ENCODE measurements at regions of chr14 and their contacts with region 1.

Region 1: DNA sequence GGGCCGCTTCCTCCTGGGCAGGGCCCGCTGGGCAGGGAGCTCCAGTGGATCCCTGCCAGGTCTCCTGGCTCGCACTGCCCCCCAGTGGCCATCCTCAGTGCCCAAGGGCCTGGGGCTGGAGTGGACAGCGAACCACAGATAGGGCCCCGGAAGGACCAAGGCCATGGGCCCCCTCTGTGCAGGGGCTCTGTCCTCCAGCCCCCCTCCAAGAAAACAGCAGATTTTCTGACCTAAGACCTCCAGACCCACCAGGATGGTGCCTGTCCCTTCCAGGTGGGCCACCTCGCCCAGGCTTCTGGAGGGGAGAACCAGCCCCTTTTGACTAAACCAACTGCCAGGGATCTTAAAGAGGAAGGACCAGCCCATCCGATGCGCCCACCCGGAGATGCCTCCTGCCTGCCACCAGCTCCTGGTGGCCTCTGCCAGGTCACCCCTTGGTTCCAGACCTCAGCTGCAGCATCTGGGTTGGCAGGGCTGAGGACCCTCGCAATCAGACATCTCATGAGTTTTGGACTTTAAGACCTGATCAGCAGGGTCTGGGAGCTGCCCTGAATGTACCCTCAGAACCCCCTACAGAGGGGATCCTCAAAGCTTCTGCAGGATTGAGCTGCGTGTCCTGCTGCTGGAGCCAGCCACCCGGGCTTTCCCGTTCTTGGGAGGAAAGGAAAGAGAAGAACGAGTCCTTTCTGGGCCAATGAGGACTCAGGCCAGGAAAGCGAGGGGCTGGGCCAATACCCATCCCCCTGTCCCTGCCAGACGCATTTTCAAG is 325.8 kb upstream of the DIO3 start:
- DNase-seq: no peak
- ATAC-seq: no peak
- H3K4me3 Mint-ChIP-seq: no peak overlapping the region
- H3K27ac Mint-ChIP-seq: no peak overlapping the region
- H3K4me1 Mint-ChIP-seq: no peaks in the 10 kb centered on the region
- H3K27me3 Mint-ChIP-seq: no peaks in the 10 kb centered on the region
- CTCF ChIP-seq: no peak

Region 2: GRCh38 chr14:100904307-100905087 is 331.0 kb before region 1 on chr14:
- CTCF ChIA-PET with region 1: no interaction called
- POLR2A ChIA-PET with region 1: no interaction called
- intact Hi-C with region 1: loop called (anchors 5 kb)
- DNase-seq: no peak
- ATAC-seq: no peak
- H3K4me3 Mint-ChIP-seq: no peak overlapping the region
- H3K27ac Mint-ChIP-seq: no peak overlapping the region
- H3K4me1 Mint-ChIP-seq: no peaks in the 10 kb centered on the region
- H3K27me3 Mint-ChIP-seq: peaks cover 29% of the 10 kb centered on the region
- CTCF ChIP-seq: no peak

Region 3: GRCh38 chr14:101137234-101137633 is 98.3 kb before region 1 on chr14:
- CTCF ChIA-PET with region 1: no interaction called
- POLR2A ChIA-PET with region 1: no interaction called
- intact Hi-C with region 1: no loop called
- DNase-seq: no peak
- ATAC-seq: no peak
- H3K4me3 Mint-ChIP-seq: no peak overlapping the region
- H3K27ac Mint-ChIP-seq: no peak overlapping the region
- H3K4me1 Mint-ChIP-seq: no peaks in the 10 kb centered on the region
- H3K27me3 Mint-ChIP-seq: no peaks in the 10 kb centered on the region
- CTCF ChIP-seq: no peak